ENCODE measurements at regions of chr11 and their contacts with region 1.

Region 1: GRCh38 chr11:126115816-126116331 is 53.2 kb upstream of the CDON start:
- DNase-seq: peak; percentile 64 to 84
- ATAC-seq: peak; percentile 77

Region 2: GRCh38 chr11:126139111-126140091 is 23.5 kb after region 1 on chr11:
- intact Hi-C with region 1: loop called in 1 of 2 experiments (anchors 2 kb)
- DNase-seq: peak in 1 of 2 donors; percentile 15
- ATAC-seq: no peak